GM23248 (cell line): ENCODE measurements at regions of chr2 and their contacts with region 1.

Region 1: DNA sequence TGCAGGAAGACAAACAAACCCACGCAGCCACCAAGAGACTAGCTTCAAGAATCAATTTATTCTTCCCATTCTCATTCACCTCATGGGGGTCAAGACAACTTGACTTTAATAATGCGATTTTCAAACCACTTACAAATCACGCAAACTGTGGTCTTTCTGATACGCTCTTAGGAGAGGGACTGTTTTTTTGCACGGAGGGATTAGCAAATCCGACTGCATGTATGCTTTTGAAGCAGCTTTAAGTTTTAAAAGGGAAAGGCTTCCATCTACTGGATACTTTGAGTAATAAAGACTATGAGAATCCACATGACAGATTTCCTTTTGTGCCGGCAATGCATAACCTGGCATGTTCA is 322.9 kb upstream of the KCNJ3 start:
- DNase-seq: peak; percentile 72
- H3K4me3 ChIP-seq: peak overlapping the region; percentile 62
- H3K27ac ChIP-seq: no peak overlapping the region
- H3K4me1 ChIP-seq: peaks cover 4% of the 10 kb centered on the region; the same call in 1 of the 2 replicates
- H3K27me3 ChIP-seq: no peaks in the 10 kb centered on the region

Region 2: GRCh38 chr2:152755029-152755428 is 1620.5 kb before region 1 on chr2:
- in situ Hi-C with region 1: loop called (anchors 25 kb)
- DNase-seq: peak; percentile 8
- H3K4me3 ChIP-seq: no peak overlapping the region
- H3K27ac ChIP-seq: no peak overlapping the region
- H3K4me1 ChIP-seq: no peaks in the 10 kb centered on the region; the same call in 1 of the 2 replicates
- H3K27me3 ChIP-seq: no peaks in the 10 kb centered on the region

Region 3: GRCh38 chr2:153917570-153917969 is 458.0 kb before region 1 on chr2:
- in situ Hi-C with region 1: no loop called
- DNase-seq: no peak
- H3K4me3 ChIP-seq: no peak overlapping the region
- H3K27ac ChIP-seq: no peak overlapping the region
- H3K4me1 ChIP-seq: no peaks in the 10 kb centered on the region
- H3K27me3 ChIP-seq: no peaks in the 10 kb centered on the region